T-cell (primary cell): ENCODE measurements at regions of chr9 and their contacts with region 1.

Region 1: GRCh38 chr9:83649080-83649479 is 26.1 kb downstream of the IDNK start:
- DNase-seq: peak; percentile 41 to 84 (median 71)
- ATAC-seq: peak; percentile 77 to 87 (median 84)
- H3K4me3 ChIP-seq: no peak overlapping the region
- H3K4me3 Mint-ChIP-seq: no peak overlapping the region
- H3K27ac ChIP-seq: no peak overlapping the region
- H3K27ac Mint-ChIP-seq: peak overlapping the region in 1 of 2 donors; percentile 42
- H3K4me1 ChIP-seq: no peaks in the 10 kb centered on the region
- H3K4me1 Mint-ChIP-seq: peaks cover 0 to 2% (median 0%) of the 10 kb centered on the region in 3 donors
- H3K27me3 ChIP-seq: no peaks in the 10 kb centered on the region
- H3K27me3 Mint-ChIP-seq: no peaks in the 10 kb centered on the region

Region 2: DNA sequence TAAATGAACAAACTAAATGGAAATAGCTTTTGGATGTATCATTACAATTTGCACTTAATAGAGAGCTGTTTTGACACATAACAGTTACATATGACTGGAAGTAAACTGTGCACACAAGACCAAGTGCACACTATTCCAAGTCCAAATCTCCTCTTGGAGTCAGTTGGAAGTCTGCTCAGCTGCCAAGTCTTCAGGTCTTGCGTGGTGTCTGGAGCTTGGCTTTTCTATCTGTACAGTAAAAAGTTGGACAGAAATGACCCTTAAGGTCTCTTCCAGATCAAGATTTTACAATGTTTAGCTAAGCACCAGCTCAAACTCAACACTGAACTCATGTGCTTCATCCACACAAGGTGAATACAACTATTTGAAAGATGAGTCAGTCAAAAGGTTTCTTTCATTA is 1043.0 kb before region 1 on chr9:
- CTCF ChIA-PET with region 1: interaction called in 1 of 2 experiments, 10 read pairs
- POLR2A ChIA-PET with region 1: no interaction called
- DNase-seq: no peak
- ATAC-seq: no peak
- H3K4me3 ChIP-seq: no peak overlapping the region
- H3K4me3 Mint-ChIP-seq: no peak overlapping the region
- H3K27ac ChIP-seq: no peak overlapping the region
- H3K27ac Mint-ChIP-seq: no peak overlapping the region
- H3K4me1 ChIP-seq: no peaks in the 10 kb centered on the region
- H3K4me1 Mint-ChIP-seq: no peaks in the 10 kb centered on the region
- H3K27me3 ChIP-seq: no peaks in the 10 kb centered on the region
- H3K27me3 Mint-ChIP-seq: no peaks in the 10 kb centered on the region

Region 3: GRCh38 chr9:83620841-83621636 is 28.0 kb before region 1 on chr9:
- CTCF ChIA-PET with region 1: interaction called, 21 to 25 read pairs
- POLR2A ChIA-PET with region 1: no interaction called
- DNase-seq: peak in 20 of 35 experiments; percentile 6 to 72 (median 22)
- ATAC-seq: no peak
- H3K4me3 ChIP-seq: no peak overlapping the region
- H3K4me3 Mint-ChIP-seq: peak overlapping the region; percentile 49 to 95 (median 55)
- H3K27ac ChIP-seq: no peak overlapping the region
- H3K27ac Mint-ChIP-seq: peak overlapping the region in 1 of 2 donors; percentile 57
- H3K4me1 ChIP-seq: peaks cover 9 to 28% of the 10 kb centered on the region in 2 experiments
- H3K4me1 Mint-ChIP-seq: peaks cover 29 to 36% (median 34%) of the 10 kb centered on the region in 3 donors
- H3K27me3 ChIP-seq: no peaks in the 10 kb centered on the region
- H3K27me3 Mint-ChIP-seq: no peaks in the 10 kb centered on the region

Region 4: GRCh38 chr9:83794051-83794450 is 145.0 kb after region 1 on chr9:
- CTCF ChIA-PET with region 1: no interaction called
- POLR2A ChIA-PET with region 1: no interaction called
- DNase-seq: no peak
- ATAC-seq: no peak
- H3K4me3 ChIP-seq: no peak overlapping the region
- H3K4me3 Mint-ChIP-seq: no peak overlapping the region
- H3K27ac ChIP-seq: no peak overlapping the region
- H3K27ac Mint-ChIP-seq: no peak overlapping the region
- H3K4me1 ChIP-seq: no peaks in the 10 kb centered on the region
- H3K4me1 Mint-ChIP-seq: no peaks in the 10 kb centered on the region
- H3K27me3 ChIP-seq: no peaks in the 10 kb centered on the region
- H3K27me3 Mint-ChIP-seq: no peaks in the 10 kb centered on the region